Activated B cell treated with CpG ODN at 0.5 μM for 24 hours (primary cell): ENCODE measurements at regions of chr1 and their contacts with region 1.

Region 1: GRCh38 chr1:241531195-241532161 is 700 bp upstream of the KMO start:
- DNase-seq: no peak
- ATAC-seq: peak; percentile 66
- H3K4me3 Mint-ChIP-seq: peak overlapping the region; percentile 91
- H3K27ac Mint-ChIP-seq: peak overlapping the region; percentile 98
- H3K4me1 Mint-ChIP-seq: peaks cover 43% of the 10 kb centered on the region
- H3K27me3 Mint-ChIP-seq: no peaks in the 10 kb centered on the region
- CTCF ChIP-seq: no peak

Region 2: DNA sequence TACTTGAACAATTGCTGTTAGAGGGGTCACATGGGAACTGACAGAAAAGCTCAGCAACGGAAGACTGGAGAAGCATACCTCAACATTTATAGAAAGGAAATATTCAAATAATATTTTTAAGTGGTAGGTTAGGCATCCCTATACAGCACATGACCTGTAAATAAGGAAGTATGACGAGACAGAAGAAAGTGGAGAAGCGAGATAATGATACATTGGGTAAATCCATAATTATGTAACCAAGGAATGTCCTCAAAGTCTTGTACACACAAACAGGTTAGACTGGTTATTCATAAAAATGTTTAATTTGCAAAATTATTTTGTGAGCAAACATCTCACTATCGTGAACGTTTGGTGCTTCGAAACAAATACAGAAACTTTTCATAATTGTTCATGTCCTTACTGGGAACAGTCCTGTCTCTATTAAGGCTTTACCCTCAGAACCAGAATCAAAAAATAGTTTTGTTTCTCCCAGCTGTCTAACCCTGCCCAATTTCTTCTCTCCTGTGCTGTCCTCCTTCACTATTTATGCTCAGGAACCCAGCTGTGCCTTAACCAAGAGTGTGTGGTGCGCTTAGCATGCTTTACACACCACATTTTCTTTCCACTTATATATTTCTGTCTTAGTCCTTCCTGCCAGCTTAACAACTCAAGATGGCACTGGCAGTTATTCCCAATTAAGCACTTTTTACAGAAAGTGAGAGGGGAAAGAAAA is 10.9 kb after region 1 on chr1:
- CTCF ChIA-PET with region 1: interaction called, 3 read pairs
- POLR2A ChIA-PET with region 1: interaction called, 4 read pairs
- intact Hi-C with region 1: loop called (anchors 1 kb)
- DNase-seq: no peak
- ATAC-seq: peak; percentile 60
- H3K4me3 Mint-ChIP-seq: peak overlapping the region; percentile 20
- H3K27ac Mint-ChIP-seq: peak overlapping the region; percentile 51
- H3K4me1 Mint-ChIP-seq: peaks cover 67% of the 10 kb centered on the region
- H3K27me3 Mint-ChIP-seq: no peaks in the 10 kb centered on the region
- CTCF ChIP-seq: no peak

Region 3: GRCh38 chr1:241600496-241600901 is 69.0 kb after region 1 on chr1:
- CTCF ChIA-PET with region 1: no interaction called
- POLR2A ChIA-PET with region 1: interaction called, 13 read pairs
- intact Hi-C with region 1: loop called (anchors 1 kb)
- DNase-seq: no peak
- ATAC-seq: peak; percentile 64
- H3K4me3 Mint-ChIP-seq: peak overlapping the region; percentile 9
- H3K27ac Mint-ChIP-seq: peak overlapping the region; percentile 78
- H3K4me1 Mint-ChIP-seq: peaks cover 74% of the 10 kb centered on the region
- H3K27me3 Mint-ChIP-seq: no peaks in the 10 kb centered on the region
- CTCF ChIP-seq: no peak

Region 4: DNA sequence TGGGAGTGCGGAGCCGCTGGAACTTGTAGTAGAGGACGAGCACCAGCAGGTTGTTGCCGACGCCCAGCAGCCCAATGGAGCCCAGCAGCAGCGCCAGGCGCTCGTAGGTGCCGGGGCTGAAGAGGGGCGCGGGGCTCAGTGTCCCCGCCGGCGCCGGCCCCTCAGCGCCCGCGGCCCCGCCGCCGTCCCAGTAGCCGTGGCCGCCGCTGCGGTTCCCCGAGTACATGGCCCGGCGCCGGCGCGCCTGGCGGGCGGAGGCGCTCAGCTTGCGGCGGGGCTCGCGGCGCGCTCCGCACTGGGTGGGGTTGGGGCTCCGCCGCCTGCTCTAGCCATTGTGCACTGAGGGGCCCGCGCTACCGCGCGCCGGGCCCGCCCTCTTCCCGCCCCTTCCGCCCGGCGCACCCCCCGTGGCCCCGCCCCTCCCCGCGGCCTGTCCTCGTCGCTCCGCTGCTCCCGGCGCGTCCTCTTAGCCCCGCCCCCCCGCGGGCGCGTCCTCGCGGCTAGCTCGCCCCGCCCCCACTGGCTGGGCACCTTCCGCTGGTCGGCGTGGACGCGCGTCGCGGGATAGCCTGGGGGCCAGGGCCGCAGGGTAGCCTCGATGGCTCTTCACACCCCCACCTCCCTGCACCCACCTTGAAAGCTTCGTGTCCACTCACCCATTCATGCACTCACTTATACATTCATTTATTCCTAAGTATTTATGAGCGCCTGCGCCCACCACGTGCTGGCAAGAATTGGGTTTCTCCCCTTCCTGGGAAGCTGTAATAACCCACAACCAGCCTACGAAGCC is 108.7 kb after region 1 on chr1 and contains the starts of genes CHML and OPN3:
- CTCF ChIA-PET with region 1: no interaction called
- POLR2A ChIA-PET with region 1: interaction called, 20 read pairs
- intact Hi-C with region 1: loop called (anchors 1 kb)
- DNase-seq: peak; percentile 96
- ATAC-seq: peak; percentile 95
- H3K4me3 Mint-ChIP-seq: peak within 1 kb of the TSS; percentile 93
- H3K27ac Mint-ChIP-seq: peak within 1 kb of the TSS; percentile 91
- H3K4me1 Mint-ChIP-seq: peaks cover 55% of the 10 kb centered on the region
- H3K27me3 Mint-ChIP-seq: no peaks in the 10 kb centered on the region
- CTCF ChIP-seq: no peak
- total RNA-seq, gene CHML: 28.3 and 35.2 TPM in 2 replicates
- total RNA-seq, gene OPN3: 31.5 and 32.1 TPM in 2 replicates

Region 5: DNA sequence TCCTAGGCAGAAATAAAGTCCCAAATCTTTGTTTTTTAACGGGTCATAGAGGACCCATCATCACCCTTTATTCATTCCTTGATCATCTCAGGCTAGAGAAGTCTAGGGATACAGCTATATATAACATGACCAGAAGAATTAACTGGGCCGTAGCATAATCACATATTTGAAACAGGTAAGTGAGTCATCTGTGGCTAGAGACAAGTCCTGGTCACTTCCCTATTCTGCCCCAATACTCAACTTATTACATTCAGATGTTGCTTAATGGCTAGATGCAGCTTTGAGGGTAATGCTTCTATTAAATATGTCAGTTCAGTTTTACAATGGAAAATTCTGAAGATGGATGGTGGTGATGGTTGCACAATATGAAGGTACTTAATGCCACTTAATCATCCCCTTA is 363.5 kb after region 1 on chr1:
- CTCF ChIA-PET with region 1: no interaction called
- POLR2A ChIA-PET with region 1: no interaction called
- intact Hi-C with region 1: loop called (anchors 1 kb)
- DNase-seq: no peak
- ATAC-seq: no peak
- H3K4me3 Mint-ChIP-seq: no peak overlapping the region
- H3K27ac Mint-ChIP-seq: no peak overlapping the region
- H3K4me1 Mint-ChIP-seq: peaks cover 15% of the 10 kb centered on the region
- H3K27me3 Mint-ChIP-seq: no peaks in the 10 kb centered on the region
- CTCF ChIP-seq: no peak

Region 6: GRCh38 chr1:242017584-242018233 is 486.2 kb after region 1 on chr1:
- CTCF ChIA-PET with region 1: no interaction called
- POLR2A ChIA-PET with region 1: no interaction called
- intact Hi-C with region 1: loop called (anchors 1 kb)
- DNase-seq: no peak
- ATAC-seq: peak; percentile 77
- H3K4me3 Mint-ChIP-seq: no peak overlapping the region
- H3K27ac Mint-ChIP-seq: no peak overlapping the region
- H3K4me1 Mint-ChIP-seq: no peaks in the 10 kb centered on the region
- H3K27me3 Mint-ChIP-seq: no peaks in the 10 kb centered on the region
- CTCF ChIP-seq: no peak

Region 7: DNA sequence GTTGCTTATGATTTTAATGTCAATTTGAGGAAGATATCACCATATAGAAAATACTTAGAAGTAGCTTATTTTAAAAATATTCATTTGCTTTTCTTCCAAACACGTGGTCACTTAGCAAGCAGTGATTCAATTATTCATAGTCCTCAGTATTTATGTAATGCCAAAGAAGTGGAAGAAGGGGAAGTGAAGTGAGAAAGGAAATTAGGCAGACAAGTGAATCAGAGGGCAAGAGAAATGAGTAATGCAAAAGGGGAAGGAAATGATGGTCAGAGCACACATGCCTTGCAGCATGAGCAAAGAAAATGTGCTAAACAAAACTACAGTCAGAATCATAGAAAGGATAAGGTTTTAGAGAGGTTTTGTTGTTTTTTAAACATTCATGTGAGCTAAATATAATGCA is 1756.2 kb after region 1 on chr1:
- CTCF ChIA-PET with region 1: no interaction called
- POLR2A ChIA-PET with region 1: no interaction called
- intact Hi-C with region 1: loop called (anchors 10 kb)
- DNase-seq: no peak
- ATAC-seq: peak; percentile 87
- H3K4me3 Mint-ChIP-seq: peak overlapping the region; percentile 53
- H3K27ac Mint-ChIP-seq: peak overlapping the region; percentile 89
- H3K4me1 Mint-ChIP-seq: peaks cover 58% of the 10 kb centered on the region
- H3K27me3 Mint-ChIP-seq: no peaks in the 10 kb centered on the region
- CTCF ChIP-seq: no peak